RWPE1 (cell line): ENCODE measurements at regions of chr12 and their contacts with region 1.

Region 1: DNA sequence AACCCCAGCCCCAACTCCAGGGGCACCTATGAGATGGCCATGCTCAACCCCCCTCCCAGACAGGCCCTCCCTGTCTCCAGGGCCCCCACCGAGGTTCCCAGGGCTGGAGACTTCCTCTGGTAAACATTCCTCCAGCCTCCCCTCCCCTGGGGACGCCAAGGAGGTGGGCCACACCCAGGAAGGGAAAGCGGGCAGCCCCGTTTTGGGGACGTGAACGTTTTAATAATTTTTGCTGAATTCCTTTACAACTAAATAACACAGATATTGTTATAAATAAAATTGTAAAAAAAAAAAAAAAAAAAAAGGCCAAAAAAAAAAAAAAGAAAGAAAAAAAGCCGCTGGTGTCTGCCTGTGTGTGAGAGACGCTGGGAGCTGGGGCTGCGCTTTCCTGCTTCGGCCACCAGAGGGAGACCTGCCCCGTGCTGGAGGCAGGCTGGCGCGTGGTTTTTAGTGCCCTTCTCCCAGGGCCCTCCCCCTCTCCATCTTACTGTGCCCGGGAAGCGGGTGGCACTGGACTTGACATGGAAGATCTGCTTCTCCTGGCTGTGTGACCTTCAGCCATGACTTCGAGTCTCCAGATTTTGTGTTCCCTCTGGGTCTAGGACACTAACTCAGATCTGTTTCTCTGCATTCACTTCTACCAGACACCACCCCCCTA is 3.4 kb upstream of the NXPH4 start:
- DNase-seq: peak; percentile 84
- H3K27ac ChIP-seq: peak overlapping the region; percentile 49
- CTCF ChIP-seq: peak; percentile 93

Region 2: GRCh38 chr12:57229634-57230380 is 16.6 kb after region 1 on chr12 and contains the start of gene SHMT2:
- CTCF ChIA-PET with region 1: interaction called, 16 read pairs
- POLR2A ChIA-PET with region 1: interaction called, 3 read pairs
- DNase-seq: peak; percentile 99
- H3K27ac ChIP-seq: peak within 1 kb of the TSS; percentile 84
- CTCF ChIP-seq: no peak

Region 3: GRCh38 chr12:57238854-57239554 is 25.8 kb after region 1 on chr12:
- CTCF ChIA-PET with region 1: interaction called, 147 read pairs
- POLR2A ChIA-PET with region 1: interaction called, 3 read pairs
- DNase-seq: peak; percentile 88
- H3K27ac ChIP-seq: peak overlapping the region; percentile 71
- CTCF ChIP-seq: peak; percentile 100

Region 4: DNA sequence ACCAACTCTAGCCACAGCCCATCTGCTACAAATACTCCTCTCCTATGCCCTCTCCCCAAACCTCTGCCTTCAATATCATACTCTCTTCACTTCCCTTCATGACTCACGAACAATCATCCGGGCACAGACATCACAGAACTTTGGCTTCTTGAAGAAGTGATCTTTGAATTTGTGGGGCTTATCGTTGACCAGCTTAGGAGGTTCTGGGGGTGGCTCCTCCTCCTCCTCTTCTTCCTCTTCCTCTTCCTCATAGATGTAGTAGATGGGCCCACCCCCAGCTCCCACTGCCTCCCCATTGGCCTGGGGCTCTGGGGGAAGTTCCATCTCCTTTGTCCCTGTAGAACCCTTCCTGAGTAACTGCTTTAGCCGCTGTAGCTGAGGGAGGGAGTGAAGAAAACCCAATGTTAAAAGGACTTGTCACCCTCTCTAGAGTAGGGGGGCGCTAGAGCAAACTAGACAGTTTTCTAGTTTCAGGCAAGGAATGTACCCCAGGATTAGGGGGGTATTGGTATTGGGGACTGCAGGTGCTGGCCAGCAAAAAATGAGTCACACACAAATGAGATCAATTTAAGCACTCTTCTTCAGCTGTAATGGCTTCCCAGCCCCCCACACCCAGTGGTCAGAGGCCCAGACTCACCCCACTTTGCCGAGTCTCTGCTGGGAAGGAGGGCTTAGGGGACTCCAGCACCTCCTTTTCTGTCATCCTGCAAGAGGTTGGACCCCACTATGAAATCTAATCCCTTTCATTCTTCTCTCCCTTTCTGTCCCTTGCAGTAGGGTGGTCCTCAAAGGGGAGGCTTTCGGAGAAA is 36.0 kb after region 1 on chr12:
- CTCF ChIA-PET with region 1: interaction called, 147 read pairs
- POLR2A ChIA-PET with region 1: no interaction called
- DNase-seq: no peak
- H3K27ac ChIP-seq: no peak overlapping the region
- CTCF ChIP-seq: no peak